ENCODE measurements at regions of chr5 and their contacts with region 1.

Region 1: DNA sequence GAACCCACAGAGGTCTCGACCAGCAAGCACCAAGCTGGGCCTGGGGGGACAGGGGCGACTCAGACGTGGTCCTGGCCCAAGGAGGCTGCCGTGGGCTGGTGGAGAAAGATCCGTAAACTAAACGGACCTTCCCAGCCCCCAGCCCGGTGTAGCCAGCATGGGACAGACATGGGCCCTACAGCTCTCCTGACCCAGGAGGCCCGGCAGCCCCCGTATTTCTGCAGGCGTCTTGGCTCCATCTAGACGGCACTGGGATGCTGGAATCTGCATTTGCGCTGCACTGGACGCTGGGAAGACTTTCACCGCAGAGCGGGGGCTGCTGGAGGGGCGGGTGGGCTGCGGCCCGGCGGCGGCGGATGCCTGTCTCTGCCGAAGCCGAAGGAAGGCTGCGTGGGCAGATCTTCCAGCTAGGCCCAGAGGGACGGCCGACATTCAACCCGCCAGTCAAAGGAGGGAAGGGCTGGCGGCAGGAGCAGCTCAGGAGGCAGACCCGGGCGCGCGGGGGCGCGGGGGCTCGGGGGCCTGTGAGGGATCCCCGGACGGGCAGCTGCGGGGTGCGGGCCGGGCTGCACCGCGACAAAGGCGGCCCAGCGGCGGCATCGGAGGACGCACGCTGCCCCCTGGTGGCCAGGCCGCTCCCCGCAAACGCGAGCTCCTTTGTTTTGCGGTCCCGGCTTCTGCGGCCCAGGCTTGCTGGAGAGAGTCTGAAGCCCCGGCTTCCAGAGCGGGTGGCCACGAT is 266.2 kb downstream of the NSG2 start:
- DNase-seq: no peak
- H3K4me3 ChIP-seq: peak overlapping the region; percentile 49
- CTCF ChIP-seq: peak; percentile 90

Region 2: GRCh38 chr5:174056064-174056847 is 255.4 kb before region 1 on chr5:
- CTCF ChIA-PET with region 1: interaction called, 509 read pairs
- POLR2A ChIA-PET with region 1: no interaction called
- DNase-seq: no peak
- H3K4me3 ChIP-seq: no peak overlapping the region
- CTCF ChIP-seq: no peak

Region 3: GRCh38 chr5:174300941-174301761 is 10.5 kb before region 1 on chr5:
- CTCF ChIA-PET with region 1: interaction called, 40 read pairs
- POLR2A ChIA-PET with region 1: no interaction called
- DNase-seq: no peak
- H3K4me3 ChIP-seq: no peak overlapping the region
- CTCF ChIP-seq: no peak